Mammary epithelial cell (primary cell): ENCODE measurements at regions of chr18 and their contacts with region 1.

Region 1: DNA sequence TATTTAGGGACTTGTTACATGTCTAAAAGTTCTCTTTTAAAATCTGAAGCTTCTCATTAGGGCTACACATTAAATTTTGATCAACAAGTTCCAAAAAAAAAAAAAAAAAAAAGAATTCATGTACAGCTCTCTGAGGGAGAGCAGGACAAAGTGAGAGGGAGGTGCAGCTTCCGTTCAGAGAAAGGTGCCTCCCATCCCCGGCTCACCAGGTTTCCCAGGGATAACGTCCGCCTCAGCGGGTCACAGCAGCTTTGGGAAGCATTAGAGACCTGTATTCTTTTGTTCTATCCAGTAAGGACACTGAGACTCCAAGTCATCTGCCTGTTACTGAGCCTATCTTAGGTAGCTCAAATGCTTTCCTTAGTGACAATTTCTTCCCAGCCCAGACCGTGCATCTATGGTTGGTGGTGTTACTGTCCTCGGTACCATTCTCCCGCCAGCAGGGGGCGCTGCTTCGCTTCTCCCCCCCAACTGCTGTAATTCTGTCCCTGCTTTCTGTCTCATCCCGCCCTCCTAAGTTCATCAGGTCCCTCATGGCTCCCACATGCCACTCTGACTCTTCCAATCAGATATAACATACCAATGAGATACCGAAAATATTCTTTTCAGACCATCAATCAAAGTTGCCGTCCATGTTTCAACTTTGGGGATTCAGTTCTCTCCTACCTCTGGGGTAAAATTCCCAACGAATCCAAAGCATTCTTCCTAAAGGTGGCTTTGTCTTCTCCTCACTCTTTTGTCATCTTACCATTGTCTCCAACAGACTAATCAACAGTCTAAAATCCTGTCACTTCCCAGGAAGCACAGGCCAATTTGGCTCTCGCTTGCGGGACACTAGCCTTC is 466.5 kb downstream of the METTL4 start:
- DNase-seq: peak; percentile 29
- H3K4me3 ChIP-seq: no peak overlapping the region
- H3K27ac ChIP-seq: no peak overlapping the region
- H3K4me1 ChIP-seq: no peaks in the 10 kb centered on the region
- H3K27me3 ChIP-seq: no peaks in the 10 kb centered on the region
- CTCF ChIP-seq: peak; percentile 83 to 90

Region 2: DNA sequence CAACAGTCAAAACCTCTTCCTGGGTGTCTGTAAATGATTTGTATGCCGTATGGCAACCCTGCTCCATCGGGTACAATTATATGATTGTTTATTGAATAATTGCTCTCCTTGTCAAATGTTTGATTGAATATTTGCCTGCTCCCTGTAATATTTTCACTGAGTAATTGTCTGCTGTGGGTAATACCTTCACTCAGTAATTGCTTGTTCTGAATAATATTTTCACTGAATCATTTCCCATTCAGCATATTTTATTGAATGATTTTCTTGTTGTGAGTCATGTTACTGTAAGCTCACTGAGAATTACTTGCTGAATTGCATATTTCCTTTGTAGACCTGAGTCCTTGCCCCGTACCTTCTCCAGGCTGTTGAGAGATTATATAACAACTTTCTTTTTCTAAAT is 68.8 kb before region 1 on chr18:
- CTCF ChIA-PET with region 1: no interaction called
- dilution Hi-C with region 1: no loop called
- in situ Hi-C with region 1: no loop called
- intact Hi-C with region 1: no loop called
- DNase-seq: peak; percentile 68
- H3K4me3 ChIP-seq: peak overlapping the region in 2 of 3 experiments; percentile 23 to 34
- H3K27ac ChIP-seq: no peak overlapping the region
- H3K4me1 ChIP-seq: peaks cover 9% of the 10 kb centered on the region
- H3K27me3 ChIP-seq: no peaks in the 10 kb centered on the region
- CTCF ChIP-seq: no peak

Region 3: DNA sequence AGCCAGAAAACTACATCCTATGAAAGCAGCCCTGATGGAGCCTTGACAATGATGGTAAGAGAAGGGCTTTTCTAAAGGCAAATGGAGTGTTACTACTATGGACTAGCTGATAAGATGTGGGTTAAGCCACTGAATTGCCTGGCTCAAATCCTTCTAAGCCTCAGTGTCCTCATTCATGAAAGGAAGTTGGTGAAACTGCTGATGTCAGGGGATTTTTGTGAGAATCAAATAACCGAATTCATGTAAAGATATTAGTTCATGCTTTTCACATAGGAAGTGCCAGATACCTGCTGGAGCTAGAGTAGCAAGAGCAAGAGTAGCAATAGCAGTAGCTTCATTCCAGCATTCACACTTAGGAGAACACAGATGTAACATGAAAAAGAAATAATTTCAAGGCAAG is 49.4 kb after region 1 on chr18:
- CTCF ChIA-PET with region 1: no interaction called
- dilution Hi-C with region 1: no loop called
- in situ Hi-C with region 1: no loop called
- intact Hi-C with region 1: no loop called
- DNase-seq: no peak
- H3K4me3 ChIP-seq: no peak overlapping the region
- H3K27ac ChIP-seq: no peak overlapping the region
- H3K4me1 ChIP-seq: no peaks in the 10 kb centered on the region
- H3K27me3 ChIP-seq: no peaks in the 10 kb centered on the region
- CTCF ChIP-seq: no peak

Region 4: DNA sequence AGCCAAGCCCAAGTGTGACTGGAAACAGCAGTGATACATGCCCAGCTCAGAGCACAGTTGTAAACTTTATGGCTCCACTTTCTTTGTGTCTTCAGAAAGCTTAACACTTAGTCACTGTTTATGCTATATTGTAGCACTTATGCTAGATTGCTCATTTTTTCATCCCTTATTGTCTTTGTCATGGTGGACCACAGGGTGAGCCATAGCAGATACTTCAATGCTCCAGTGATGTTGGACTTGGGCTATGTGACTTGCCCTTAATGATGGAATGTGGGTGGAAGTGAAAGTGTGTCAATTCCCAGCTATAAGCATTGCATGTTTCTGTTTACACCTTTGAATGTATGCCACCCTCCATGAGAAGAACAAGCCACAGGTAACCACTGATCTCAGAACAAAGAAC is 64.9 kb after region 1 on chr18:
- CTCF ChIA-PET with region 1: no interaction called
- dilution Hi-C with region 1: loop called (anchors 5 kb)
- in situ Hi-C with region 1: no loop called
- intact Hi-C with region 1: no loop called
- DNase-seq: peak; percentile 45
- H3K4me3 ChIP-seq: no peak overlapping the region
- H3K27ac ChIP-seq: no peak overlapping the region
- H3K4me1 ChIP-seq: no peaks in the 10 kb centered on the region
- H3K27me3 ChIP-seq: no peaks in the 10 kb centered on the region
- CTCF ChIP-seq: no peak

Region 5: DNA sequence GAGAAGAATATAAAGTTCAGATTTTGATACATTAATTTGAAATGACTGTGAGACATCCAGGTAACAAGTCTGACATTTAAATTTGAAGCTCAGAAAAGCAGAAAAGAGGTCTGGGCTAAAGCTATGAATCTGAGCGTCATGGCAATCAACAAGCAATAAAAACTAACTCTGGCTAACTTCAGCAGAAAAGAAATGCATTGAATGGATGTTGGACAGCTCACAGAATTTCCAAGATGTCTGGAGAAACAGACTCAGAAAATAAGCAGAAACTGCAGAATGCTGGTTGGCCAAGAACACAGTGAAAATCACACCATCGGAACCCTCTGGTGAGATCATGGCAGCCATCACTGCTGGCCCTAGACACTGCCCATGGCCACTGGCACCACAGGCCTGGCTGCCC is 99.9 kb after region 1 on chr18:
- CTCF ChIA-PET with region 1: no interaction called
- dilution Hi-C with region 1: loop called (anchors 5 kb)
- in situ Hi-C with region 1: loop called in 1 of 2 experiments (anchors 25 kb)
- intact Hi-C with region 1: no loop called
- DNase-seq: no peak
- H3K4me3 ChIP-seq: no peak overlapping the region
- H3K27ac ChIP-seq: no peak overlapping the region
- H3K4me1 ChIP-seq: no peaks in the 10 kb centered on the region
- H3K27me3 ChIP-seq: peaks cover 3% of the 10 kb centered on the region
- CTCF ChIP-seq: no peak

Region 6: DNA sequence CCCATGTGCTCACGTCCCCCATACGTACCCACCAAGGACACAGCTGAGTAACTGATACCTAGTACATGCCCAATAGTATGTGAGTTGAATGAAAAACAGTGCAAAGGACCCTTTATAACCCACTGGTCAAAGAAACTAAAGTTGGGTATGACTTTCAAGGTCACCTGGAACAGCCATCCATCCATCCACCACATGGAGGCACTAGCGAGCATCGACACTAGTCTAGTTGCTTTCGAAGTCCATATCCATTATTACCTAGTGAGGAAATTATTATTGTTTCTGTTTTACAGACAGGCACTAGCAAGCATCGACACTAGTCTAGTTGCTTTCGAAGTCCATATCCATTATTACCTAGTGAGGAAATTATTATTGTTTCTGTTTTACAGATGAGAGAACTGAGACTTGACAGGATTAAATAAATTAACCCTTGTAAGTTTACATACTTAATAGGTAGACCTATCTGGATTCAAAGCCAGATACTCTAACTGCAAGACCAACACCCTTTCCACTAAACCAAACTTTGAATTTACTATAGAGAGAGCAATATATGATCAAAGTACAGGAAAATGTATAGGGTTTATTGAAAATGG is 232.8 kb after region 1 on chr18:
- CTCF ChIA-PET with region 1: interaction called, 3 read pairs
- dilution Hi-C with region 1: no loop called
- in situ Hi-C with region 1: no loop called
- intact Hi-C with region 1: loop called (anchors 10 kb)
- DNase-seq: peak; percentile 15
- H3K4me3 ChIP-seq: no peak overlapping the region
- H3K27ac ChIP-seq: no peak overlapping the region
- H3K4me1 ChIP-seq: no peaks in the 10 kb centered on the region
- H3K27me3 ChIP-seq: no peaks in the 10 kb centered on the region
- CTCF ChIP-seq: peak; percentile 63 to 67

Region 7: DNA sequence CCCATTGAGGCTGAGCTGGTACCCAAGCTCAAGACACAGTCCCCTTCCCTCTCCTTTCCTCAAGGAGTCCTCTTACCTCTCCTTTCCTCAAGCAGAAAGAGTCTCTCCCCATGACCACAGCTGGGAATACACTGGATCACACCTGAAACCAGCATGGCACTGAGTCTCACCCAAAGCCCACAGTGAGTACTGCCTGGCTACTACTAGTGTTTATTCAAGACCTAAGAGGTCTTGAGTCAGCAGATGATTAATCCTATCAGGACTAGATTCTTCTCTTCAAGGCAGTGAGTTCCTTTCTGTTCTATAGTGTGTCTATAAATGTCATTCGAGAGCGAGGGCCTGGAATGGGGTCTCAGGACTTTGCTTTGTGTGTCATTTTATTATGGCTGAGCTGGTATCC is 355.0 kb after region 1 on chr18:
- CTCF ChIA-PET with region 1: no interaction called
- dilution Hi-C with region 1: no loop called
- in situ Hi-C with region 1: no loop called
- intact Hi-C with region 1: loop called (anchors 10 kb)
- DNase-seq: peak; percentile 76
- H3K4me3 ChIP-seq: no peak overlapping the region
- H3K27ac ChIP-seq: no peak overlapping the region
- H3K4me1 ChIP-seq: no peaks in the 10 kb centered on the region
- H3K27me3 ChIP-seq: no peaks in the 10 kb centered on the region
- CTCF ChIP-seq: no peak

Region 8: GRCh38 chr18:2547477-2548087 is 442.7 kb after region 1 on chr18:
- CTCF ChIA-PET with region 1: no interaction called
- dilution Hi-C with region 1: no loop called
- in situ Hi-C with region 1: loop called in 1 of 2 experiments (anchors 10 kb)
- intact Hi-C with region 1: loop called (anchors 1 kb)
- DNase-seq: peak; percentile 19
- H3K4me3 ChIP-seq: no peak overlapping the region
- H3K27ac ChIP-seq: no peak overlapping the region
- H3K4me1 ChIP-seq: no peaks in the 10 kb centered on the region
- H3K27me3 ChIP-seq: no peaks in the 10 kb centered on the region
- CTCF ChIP-seq: peak; percentile 39 to 42